Left colon (tissue), 2 donors: ENCODE measurements at regions of chr3 and their contacts with region 1.

Region 1: GRCh38 chr3:150409512-150410310 is 1.6 kb downstream of the TSC22D2 start:
- DNase-seq: peak; percentile 76 to 84
- ATAC-seq: peak; percentile 56

Region 2: GRCh38 chr3:150238998-150239619 is 170.6 kb before region 1 on chr3:
- intact Hi-C with region 1: loop called in 1 of 2 experiments (anchors 5 kb)
- DNase-seq: peak in 1 of 2 donors; percentile 25
- ATAC-seq: peak; percentile 91